Sciatic nerve (tissue), 2 donors: ENCODE measurements at regions of chr13 and their contacts with region 1.

Region 1: DNA sequence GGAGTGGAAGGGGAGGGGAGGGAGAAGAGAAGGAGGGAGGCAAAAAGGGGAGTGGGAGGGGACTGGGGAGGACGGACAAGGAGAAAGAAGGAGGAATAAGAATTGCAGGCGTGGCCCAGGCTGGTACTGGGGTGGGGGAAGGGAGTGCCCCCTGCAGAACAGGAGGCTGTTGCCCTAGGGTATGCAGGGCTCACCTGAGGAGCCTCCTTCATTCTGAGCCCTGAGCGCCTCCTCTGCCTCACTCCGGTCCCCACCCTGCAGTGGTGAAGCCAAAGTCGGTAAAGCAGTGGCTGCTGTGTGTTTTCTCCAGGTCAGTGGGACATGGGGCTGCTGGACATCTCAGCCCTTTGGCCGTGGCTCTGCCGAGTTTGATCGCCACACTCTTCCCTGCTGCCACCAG is 9.1 kb upstream of the CDC16 start:
- DNase-seq: no peak
- ATAC-seq: no peak

Region 2: GRCh38 chr13:113579686-113580085 is 645.9 kb before region 1 on chr13:
- intact Hi-C with region 1: no loop called
- DNase-seq: no peak
- ATAC-seq: no peak

Region 3: DNA sequence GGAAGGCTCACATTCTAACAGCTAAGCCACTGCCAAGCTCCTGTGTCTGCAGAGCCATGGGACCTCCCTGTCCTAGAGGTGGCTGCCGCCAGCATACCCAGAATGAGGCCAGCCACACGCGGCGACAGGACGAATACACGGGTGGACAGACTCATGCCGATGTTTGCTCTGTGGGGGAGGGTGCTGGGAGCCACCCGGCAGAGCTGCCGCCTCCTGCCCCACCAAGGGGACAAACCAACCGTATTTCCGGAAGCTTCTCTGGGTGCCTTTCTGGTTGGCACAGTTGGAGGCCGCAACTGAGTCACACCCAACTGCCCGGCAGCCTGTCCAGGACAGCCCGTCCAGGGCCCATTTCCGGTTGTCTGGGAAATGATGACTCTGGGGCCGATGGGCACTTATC is 272.0 kb before region 1 on chr13:
- intact Hi-C with region 1: loop called (anchors 2 kb)
- DNase-seq: no peak
- ATAC-seq: no peak

Region 4: GRCh38 chr13:114185182-114185971 is 40.2 kb before region 1 on chr13:
- intact Hi-C with region 1: no loop called
- DNase-seq: no peak
- ATAC-seq: no peak